ENCODE measurements at regions of chr11 and their contacts with region 1.

Region 1: GRCh38 chr11:59668950-59669610 is at the start of gene PATL1:
- DNase-seq: peak; percentile 97
- ATAC-seq: peak; percentile 95
- H3K4me3 Mint-ChIP-seq: peak within 1 kb of the TSS; percentile 97
- H3K27ac Mint-ChIP-seq: peak within 1 kb of the TSS; percentile 99
- H3K4me1 Mint-ChIP-seq: peaks cover 32% of the 10 kb centered on the region
- H3K27me3 Mint-ChIP-seq: no peaks in the 10 kb centered on the region
- total RNA-seq, gene PATL1: 52.9 to 54.1 TPM

Region 2: DNA sequence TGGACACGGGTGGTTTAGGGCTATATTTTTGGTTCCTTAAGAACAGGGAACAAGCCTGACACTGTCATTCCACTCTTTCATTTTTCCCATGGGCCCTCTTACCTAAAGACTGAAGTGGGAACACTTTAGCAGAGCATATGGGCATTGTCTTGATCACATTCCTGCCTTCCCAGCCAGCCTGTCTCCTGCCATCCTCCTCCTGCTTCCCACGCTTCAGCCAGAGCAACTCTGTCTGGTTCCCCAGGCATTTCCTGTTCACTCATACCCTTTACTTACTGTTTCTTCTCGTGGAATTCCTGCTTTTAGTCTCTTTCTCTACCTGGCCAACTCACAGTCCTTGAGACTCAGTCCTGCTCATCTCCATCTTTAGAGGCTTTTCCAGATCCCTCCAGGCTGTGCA is 118.7 kb after region 1 on chr11:
- POLR2A ChIA-PET with region 1: no interaction called
- DNase-seq: no peak
- ATAC-seq: no peak
- H3K4me3 Mint-ChIP-seq: no peak overlapping the region
- H3K27ac Mint-ChIP-seq: peak overlapping the region; percentile 7
- H3K4me1 Mint-ChIP-seq: peaks cover 45% of the 10 kb centered on the region
- H3K27me3 Mint-ChIP-seq: no peaks in the 10 kb centered on the region

Region 3: GRCh38 chr11:59810189-59810910 is 141.3 kb after region 1 on chr11 and contains the start of gene MRPL16:
- POLR2A ChIA-PET with region 1: interaction called, 18 read pairs
- DNase-seq: peak; percentile 88
- ATAC-seq: peak; percentile 98
- H3K4me3 Mint-ChIP-seq: peak within 1 kb of the TSS; percentile 94
- H3K27ac Mint-ChIP-seq: peak within 1 kb of the TSS; percentile 93
- H3K4me1 Mint-ChIP-seq: peaks cover 27% of the 10 kb centered on the region
- H3K27me3 Mint-ChIP-seq: no peaks in the 10 kb centered on the region
- total RNA-seq, gene MRPL16: 67.2 to 70.0 TPM